Heart left ventricle (tissue), 16 donors: ENCODE measurements at regions of chr3 and their contacts with region 1.

Region 1: GRCh38 chr3:8607234-8608040 is 37.2 kb downstream of the SSUH2 start:
- DNase-seq: peak in 4 of 5 donors; percentile 73 to 81 (median 76)
- ATAC-seq: peak; percentile 97 to 98 (median 98)
- H3K4me3 ChIP-seq: no peak overlapping the region
- H3K27ac ChIP-seq: peak overlapping the region in 3 of 12 donors; percentile 6 to 49 (median 40)
- H3K4me1 ChIP-seq: peaks cover 0 to 27% (median 20%) of the 10 kb centered on the region in 12 donors
- H3K27me3 ChIP-seq: no peaks in the 10 kb centered on the region
- CTCF ChIP-seq: peak; percentile 53 to 91 (median 82)
- POLR2A ChIP-seq: no peak

Region 2: GRCh38 chr3:8458711-8459110 is 148.7 kb before region 1 on chr3:
- intact Hi-C with region 1: loop called in 1 of 10 experiments (anchors 5 kb)
- DNase-seq: no peak
- ATAC-seq: peak in 3 of 4 donors; percentile 30 to 66 (median 50)
- H3K4me3 ChIP-seq: no peak overlapping the region
- H3K27ac ChIP-seq: peak overlapping the region in 3 of 12 donors; percentile 14 to 77 (median 49)
- H3K4me1 ChIP-seq: peaks cover 0 to 23% (median 0%) of the 10 kb centered on the region in 12 donors
- H3K27me3 ChIP-seq: no peaks in the 10 kb centered on the region
- CTCF ChIP-seq: no peak
- POLR2A ChIP-seq: no peak

Region 3: GRCh38 chr3:8482960-8483665 is 124.3 kb before region 1 on chr3:
- intact Hi-C with region 1: loop called in 6 of 10 experiments (anchors 1 to 10 kb)
- DNase-seq: peak; percentile 72 to 86 (median 76)
- ATAC-seq: peak; percentile 87 to 94 (median 93)
- H3K4me3 ChIP-seq: no peak overlapping the region
- H3K27ac ChIP-seq: peak overlapping the region; percentile 7 to 75 (median 52)
- H3K4me1 ChIP-seq: peaks cover 0 to 50% (median 27%) of the 10 kb centered on the region in 12 donors
- H3K27me3 ChIP-seq: no peaks in the 10 kb centered on the region
- CTCF ChIP-seq: no peak
- POLR2A ChIP-seq: no peak

Region 4: GRCh38 chr3:8529181-8529637 is 78.2 kb before region 1 on chr3:
- intact Hi-C with region 1: loop called in 1 of 10 experiments (anchors 5 kb)
- DNase-seq: peak in 3 of 5 donors; percentile 35 to 56 (median 50)
- ATAC-seq: peak in 3 of 4 donors; percentile 27 to 62 (median 60)
- H3K4me3 ChIP-seq: no peak overlapping the region
- H3K27ac ChIP-seq: peak overlapping the region in 11 of 12 donors; percentile 10 to 58 (median 38)
- H3K4me1 ChIP-seq: peaks cover 0 to 94% (median 54%) of the 10 kb centered on the region in 12 donors
- H3K27me3 ChIP-seq: no peaks in the 10 kb centered on the region
- CTCF ChIP-seq: no peak
- POLR2A ChIP-seq: no peak

Region 5: GRCh38 chr3:8540456-8540855 is 67.0 kb before region 1 on chr3:
- intact Hi-C with region 1: no loop called
- DNase-seq: no peak
- ATAC-seq: peak in 2 of 4 donors; percentile 20 to 38
- H3K4me3 ChIP-seq: no peak overlapping the region
- H3K27ac ChIP-seq: peak overlapping the region in 3 of 12 donors; percentile 28 to 48 (median 28)
- H3K4me1 ChIP-seq: peaks cover 0 to 34% (median 15%) of the 10 kb centered on the region in 12 donors
- H3K27me3 ChIP-seq: no peaks in the 10 kb centered on the region
- CTCF ChIP-seq: no peak
- POLR2A ChIP-seq: no peak